Activated B cell treated with CpG ODN at 0.5 μM for 24 hours (primary cell): ENCODE measurements at regions of chr17 and their contacts with region 1.

Region 1: GRCh38 chr17:39845052-39845846 is 18.9 kb downstream of the IKZF3 start:
- DNase-seq: no peak
- ATAC-seq: no peak
- H3K4me3 Mint-ChIP-seq: no peak overlapping the region
- H3K27ac Mint-ChIP-seq: peak overlapping the region; percentile 3
- H3K4me1 Mint-ChIP-seq: peaks cover 80% of the 10 kb centered on the region
- H3K27me3 Mint-ChIP-seq: no peaks in the 10 kb centered on the region
- CTCF ChIP-seq: no peak

Region 2: GRCh38 chr17:39769974-39770587 is 75.2 kb before region 1 on chr17:
- CTCF ChIA-PET with region 1: no interaction called
- POLR2A ChIA-PET with region 1: no interaction called
- intact Hi-C with region 1: loop called (anchors 5 kb)
- DNase-seq: no peak
- ATAC-seq: peak; percentile 68
- H3K4me3 Mint-ChIP-seq: peak overlapping the region; percentile 58
- H3K27ac Mint-ChIP-seq: peak overlapping the region; percentile 96
- H3K4me1 Mint-ChIP-seq: peaks cover 99% of the 10 kb centered on the region
- H3K27me3 Mint-ChIP-seq: no peaks in the 10 kb centered on the region
- CTCF ChIP-seq: no peak

Region 3: GRCh38 chr17:39831588-39831987 is 13.7 kb before region 1 on chr17:
- CTCF ChIA-PET with region 1: no interaction called
- POLR2A ChIA-PET with region 1: interaction called, 14 read pairs
- intact Hi-C with region 1: no loop called
- DNase-seq: no peak
- ATAC-seq: no peak
- H3K4me3 Mint-ChIP-seq: no peak overlapping the region
- H3K27ac Mint-ChIP-seq: peak overlapping the region; percentile 46
- H3K4me1 Mint-ChIP-seq: peaks cover 48% of the 10 kb centered on the region
- H3K27me3 Mint-ChIP-seq: no peaks in the 10 kb centered on the region
- CTCF ChIP-seq: no peak